Natural killer cell (primary cell): ENCODE measurements at regions of chr1 and their contacts with region 1.

Region 1: DNA sequence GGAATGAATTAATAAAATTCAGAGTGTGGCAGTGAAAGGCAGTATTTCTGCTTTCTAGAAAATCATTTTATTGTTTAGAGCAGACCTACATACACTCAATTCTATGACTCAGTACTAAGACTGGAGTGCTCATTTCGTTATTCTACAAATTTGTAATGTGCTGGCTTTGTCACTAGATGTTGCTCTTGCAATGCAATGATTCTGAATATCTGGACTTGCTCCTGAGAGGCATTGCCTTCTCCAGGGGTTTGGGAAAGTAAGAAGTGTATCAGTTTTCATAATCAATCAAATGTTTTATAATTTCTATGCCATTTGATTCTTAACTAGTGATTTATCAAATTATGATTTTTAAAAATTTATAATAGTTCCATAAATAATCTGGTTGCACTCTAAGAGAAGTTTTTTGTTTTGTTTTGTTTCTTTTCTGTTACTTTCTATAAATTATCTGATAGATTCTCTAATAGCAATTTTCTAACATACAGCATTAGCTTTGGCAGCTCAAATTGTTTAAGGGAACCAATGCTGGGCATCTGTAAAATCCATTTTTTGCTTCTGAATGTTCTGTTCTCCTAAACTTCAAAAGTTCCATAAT is 280.5 kb upstream of the SGIP1 start:
- DNase-seq: peak in 1 of 2 donors; percentile 74
- ATAC-seq: peak; percentile 55 to 77 (median 68)
- H3K4me3 ChIP-seq: no peak overlapping the region
- H3K4me3 Mint-ChIP-seq: no peak overlapping the region
- H3K27ac ChIP-seq: no peak overlapping the region
- H3K27ac Mint-ChIP-seq: no peak overlapping the region
- H3K4me1 ChIP-seq: no peaks in the 10 kb centered on the region
- H3K4me1 Mint-ChIP-seq: peaks cover 0 to 4% of the 10 kb centered on the region in 2 donors
- H3K27me3 ChIP-seq: no peaks in the 10 kb centered on the region
- H3K27me3 Mint-ChIP-seq: no peaks in the 10 kb centered on the region
- CTCF ChIP-seq: peak; percentile 61

Region 2: DNA sequence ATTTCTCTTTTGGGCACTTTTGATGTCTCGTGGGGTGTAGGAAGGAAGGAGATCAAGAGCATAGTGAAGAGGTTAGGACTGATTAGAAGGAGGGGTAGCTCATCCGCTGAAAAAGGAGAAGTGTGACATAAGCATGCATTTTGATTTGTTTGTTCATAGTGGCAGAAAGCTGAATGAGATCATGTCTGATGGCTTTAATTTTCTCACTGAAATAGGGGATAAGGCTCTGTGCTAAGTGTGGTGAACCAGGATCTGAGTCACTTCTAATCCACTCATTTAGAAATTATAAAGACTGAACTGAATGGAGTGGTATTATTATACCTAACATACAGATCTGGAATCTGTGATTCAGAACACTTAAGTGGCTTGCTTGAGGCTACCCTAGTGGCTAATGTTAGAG is 116.2 kb before region 1 on chr1:
- intact Hi-C with region 1: no loop called
- DNase-seq: no peak
- ATAC-seq: no peak
- H3K4me3 ChIP-seq: no peak overlapping the region
- H3K4me3 Mint-ChIP-seq: no peak overlapping the region
- H3K27ac ChIP-seq: no peak overlapping the region
- H3K27ac Mint-ChIP-seq: no peak overlapping the region
- H3K4me1 ChIP-seq: no peaks in the 10 kb centered on the region
- H3K4me1 Mint-ChIP-seq: no peaks in the 10 kb centered on the region
- H3K27me3 ChIP-seq: no peaks in the 10 kb centered on the region
- H3K27me3 Mint-ChIP-seq: no peaks in the 10 kb centered on the region
- CTCF ChIP-seq: no peak

Region 3: DNA sequence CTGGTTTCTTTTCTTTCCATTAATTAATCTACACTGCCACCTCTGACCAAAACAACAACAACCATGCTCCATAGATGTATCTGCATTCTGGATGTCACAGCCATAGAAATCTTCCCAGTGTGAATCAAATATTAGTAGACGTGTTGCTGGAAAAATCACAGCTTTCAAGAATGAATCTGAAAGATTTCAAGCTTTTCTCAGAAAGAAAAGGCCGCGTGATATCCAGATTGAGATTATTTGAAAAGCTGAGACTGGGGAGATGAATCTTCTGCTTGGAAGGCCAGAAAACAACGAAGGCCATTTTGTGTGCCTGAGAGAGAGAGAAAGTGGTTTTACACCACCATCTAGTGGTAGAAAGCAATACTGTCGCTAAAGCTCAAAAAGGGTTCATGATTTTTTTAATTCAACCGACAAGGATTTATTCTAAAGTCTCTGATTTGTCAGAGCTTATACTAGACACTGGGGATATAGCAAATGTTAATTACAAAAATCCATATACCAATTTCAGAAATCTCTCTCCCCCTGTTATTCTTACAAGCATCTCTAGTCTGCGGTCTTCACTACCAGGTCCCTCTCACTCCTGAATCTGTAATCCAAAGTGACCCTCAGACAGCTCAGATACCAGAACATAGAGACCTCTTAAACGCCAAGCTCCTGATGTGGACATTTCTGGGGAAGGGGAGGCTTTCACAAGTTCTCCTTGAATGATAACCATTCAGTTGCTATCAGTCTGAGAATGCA is 193.0 kb after region 1 on chr1:
- intact Hi-C with region 1: loop called (anchors 1 kb)
- DNase-seq: peak in 1 of 2 donors; percentile 89
- ATAC-seq: peak; percentile 73 to 84 (median 80)
- H3K4me3 ChIP-seq: no peak overlapping the region
- H3K4me3 Mint-ChIP-seq: peak overlapping the region; percentile 43
- H3K27ac ChIP-seq: peak overlapping the region; percentile 56
- H3K27ac Mint-ChIP-seq: peak overlapping the region; percentile 65 to 75
- H3K4me1 ChIP-seq: peaks cover 10% of the 10 kb centered on the region
- H3K4me1 Mint-ChIP-seq: peaks cover 14% of the 10 kb centered on the region in 2 donors
- H3K27me3 ChIP-seq: no peaks in the 10 kb centered on the region
- H3K27me3 Mint-ChIP-seq: peaks cover 4 to 26% of the 10 kb centered on the region in 2 donors
- CTCF ChIP-seq: peak; percentile 74